ENCODE measurements at regions of chr11 and their contacts with region 1.

Region 1: DNA sequence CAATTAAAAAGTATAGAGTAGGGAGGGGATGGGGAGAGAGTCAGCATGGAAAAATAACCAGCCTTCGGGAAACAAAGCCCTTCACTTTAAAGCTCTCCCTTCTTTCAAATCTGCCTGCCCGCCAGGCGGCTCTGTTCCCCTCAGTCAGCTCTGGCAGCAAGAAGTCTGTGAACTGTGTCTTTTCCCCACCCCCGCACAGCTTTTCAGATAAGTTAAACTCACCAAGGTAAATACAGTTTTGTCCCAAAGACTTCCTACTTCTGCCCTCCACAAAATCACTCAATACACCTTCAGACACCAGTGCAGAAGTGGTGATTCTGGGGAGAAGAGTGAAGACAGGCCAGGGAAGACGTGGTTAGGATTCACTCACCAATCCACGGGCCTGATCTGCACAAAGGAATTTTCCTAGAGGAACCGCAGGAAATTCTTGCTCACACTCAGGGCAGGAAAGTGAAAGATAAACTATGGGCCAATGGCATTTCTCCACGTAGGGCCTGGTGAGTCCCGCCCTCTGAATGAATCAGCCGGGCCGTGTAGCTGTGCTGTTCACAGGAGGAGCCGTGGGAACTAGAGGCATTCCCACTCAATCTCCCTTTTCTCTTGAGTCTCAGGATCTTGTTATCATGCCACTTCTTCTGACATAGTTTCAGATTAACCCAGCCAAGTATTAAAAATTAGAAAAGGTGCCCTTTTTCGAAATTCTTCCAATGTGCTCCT is at the start of gene TRIM5:
- DNase-seq: peak; percentile 70 to 96
- H3K4me3 ChIP-seq: peak within 1 kb of the TSS; percentile 60 to 64
- H3K27ac ChIP-seq: peak within 1 kb of the TSS; percentile 88 to 94
- H3K4me1 ChIP-seq: peaks cover 3 to 12% of the 10 kb centered on the region in 2 donors
- H3K27me3 ChIP-seq: no peaks in the 10 kb centered on the region
- CTCF ChIP-seq: peak; percentile 48 to 72 (median 55)
- total RNA-seq, gene TRIM5: 45.1 TPM

Region 2: DNA sequence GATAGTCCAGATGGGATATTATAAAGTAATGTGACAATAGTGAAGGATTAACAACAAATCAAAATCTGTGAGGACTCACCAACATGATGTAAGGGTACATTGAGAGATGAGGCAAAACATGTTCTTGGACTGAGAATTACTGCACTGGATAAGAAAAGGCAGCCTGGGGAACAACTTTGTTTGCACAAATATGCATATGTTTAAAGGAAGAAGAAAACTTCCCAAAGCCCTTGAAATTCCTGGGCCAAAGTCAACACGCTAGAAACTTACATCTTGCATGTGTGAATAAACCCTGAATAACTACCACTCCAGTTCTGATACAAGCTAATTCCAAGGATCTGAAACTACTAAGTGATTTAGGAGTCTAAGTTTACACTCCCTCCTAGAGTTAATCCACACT is 547.8 kb before region 1 on chr11:
- intact Hi-C with region 1: no loop called
- DNase-seq: no peak
- H3K4me3 ChIP-seq: no peak overlapping the region
- H3K27ac ChIP-seq: no peak overlapping the region
- H3K4me1 ChIP-seq: no peaks in the 10 kb centered on the region
- H3K27me3 ChIP-seq: no peaks in the 10 kb centered on the region
- CTCF ChIP-seq: no peak

Region 3: DNA sequence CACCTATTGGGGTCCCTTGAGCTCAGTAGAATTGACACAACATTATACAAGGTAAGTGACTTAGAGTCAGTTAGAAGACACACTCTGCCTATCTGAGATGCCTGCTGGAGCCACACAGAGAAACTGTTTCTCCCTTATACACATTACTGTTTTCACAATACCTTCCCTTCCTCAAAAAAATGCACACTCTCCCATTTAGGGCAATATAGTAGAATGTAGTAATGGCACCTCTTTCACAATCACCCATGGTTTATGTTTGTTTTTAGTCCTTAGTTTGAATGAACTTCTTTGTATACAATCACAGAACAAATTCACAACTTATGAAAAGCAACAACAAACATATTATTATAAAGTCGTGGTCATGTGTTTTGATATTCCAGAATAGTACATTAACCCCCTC is 150.8 kb before region 1 on chr11:
- intact Hi-C with region 1: no loop called
- DNase-seq: no peak
- H3K4me3 ChIP-seq: no peak overlapping the region
- H3K27ac ChIP-seq: no peak overlapping the region
- H3K4me1 ChIP-seq: no peaks in the 10 kb centered on the region
- H3K27me3 ChIP-seq: no peaks in the 10 kb centered on the region
- CTCF ChIP-seq: no peak

Region 4: GRCh38 chr11:5600374-5600851 is 84.4 kb before region 1 on chr11:
- intact Hi-C with region 1: loop called (anchors 2 kb)
- DNase-seq: peak in 1 of 2 donors; percentile 87
- H3K4me3 ChIP-seq: no peak overlapping the region
- H3K27ac ChIP-seq: peak overlapping the region; percentile 68 to 79
- H3K4me1 ChIP-seq: peaks cover 5% of the 10 kb centered on the region in 2 donors
- H3K27me3 ChIP-seq: no peaks in the 10 kb centered on the region
- CTCF ChIP-seq: peak; percentile 35 to 86 (median 67)

Region 5: GRCh38 chr11:5624489-5625279 is 60.1 kb before region 1 on chr11 and contains the start of gene TRIM34:
- intact Hi-C with region 1: loop called (anchors 5 kb)
- DNase-seq: peak in 1 of 2 donors; percentile 69
- H3K4me3 ChIP-seq: peak within 1 kb of the TSS; percentile 62 to 68
- H3K27ac ChIP-seq: peak within 1 kb of the TSS in 1 of 2 donors; percentile 50
- H3K4me1 ChIP-seq: peaks cover 0 to 24% of the 10 kb centered on the region in 2 donors
- H3K27me3 ChIP-seq: no peaks in the 10 kb centered on the region
- CTCF ChIP-seq: no peak
- total RNA-seq, gene TRIM34: not detected

Measured in ascending aorta (tissue), 2 donors.